ENCODE measurements at regions of chr1 and their contacts with region 1.

Region 1: DNA sequence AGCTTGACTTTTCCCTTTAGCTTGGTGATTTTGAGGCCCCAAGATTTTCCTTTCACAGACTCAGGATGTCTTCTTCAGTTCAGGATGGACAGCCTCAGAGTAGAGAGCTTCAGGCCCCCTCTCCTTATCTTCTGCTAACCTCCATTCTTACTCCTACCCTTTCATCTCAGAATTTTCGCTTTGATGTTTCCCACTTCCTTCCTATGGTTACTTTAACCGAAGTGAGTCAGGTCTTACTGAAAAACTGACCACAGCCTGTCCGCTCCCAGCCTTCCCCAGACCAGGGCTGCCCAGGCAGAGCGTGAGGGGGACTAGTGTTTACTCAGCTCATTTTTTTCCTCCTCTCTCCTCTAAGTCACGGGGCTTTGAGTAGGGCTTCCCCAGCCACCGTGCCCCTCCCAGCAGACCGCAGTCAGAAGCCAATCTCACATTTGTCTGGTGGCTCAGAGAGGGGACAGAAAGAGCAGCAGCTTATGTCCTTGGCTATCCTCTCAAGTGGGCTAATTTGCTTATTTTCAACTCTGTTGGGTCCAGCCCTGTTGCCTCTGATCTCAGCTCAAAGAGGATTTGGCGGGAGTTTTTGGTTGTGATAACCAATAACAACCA is 4.2 kb upstream of the IL19 start:
- DNase-seq: peak; percentile 79
- H3K4me3 Mint-ChIP-seq: no peak overlapping the region
- H3K27ac Mint-ChIP-seq: no peak overlapping the region
- H3K4me1 Mint-ChIP-seq: peaks cover 63% of the 10 kb centered on the region
- H3K27me3 Mint-ChIP-seq: peaks cover 7% of the 10 kb centered on the region

Region 2: DNA sequence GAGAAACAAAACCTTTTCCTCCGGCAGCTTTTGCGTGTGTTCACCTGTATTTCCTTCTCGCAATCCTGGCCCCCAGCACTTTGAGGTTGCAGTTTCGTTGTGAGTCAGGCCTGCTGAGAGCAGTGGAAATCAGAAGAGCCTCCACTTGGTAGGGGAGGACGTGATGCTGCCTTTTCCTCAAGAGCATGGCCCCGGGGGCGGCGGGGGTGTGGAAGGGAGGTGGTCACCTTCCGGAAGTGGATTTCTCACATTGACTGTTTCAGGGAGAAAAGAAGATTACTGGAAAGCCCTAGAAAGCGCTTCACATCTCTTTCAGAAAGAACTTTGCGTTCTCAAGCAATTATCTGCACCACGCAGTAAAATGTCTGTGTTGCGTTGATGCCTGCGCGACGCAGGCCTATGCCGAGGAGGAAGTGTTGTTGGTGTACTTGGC is 18.1 kb after region 1 on chr1:
- CTCF ChIA-PET with region 1: interaction called, 4 read pairs
- intact Hi-C with region 1: loop called (anchors 1 kb)
- DNase-seq: peak; percentile 98
- H3K4me3 Mint-ChIP-seq: no peak overlapping the region
- H3K27ac Mint-ChIP-seq: peak overlapping the region; percentile 62
- H3K4me1 Mint-ChIP-seq: peaks cover 50% of the 10 kb centered on the region
- H3K27me3 Mint-ChIP-seq: peaks cover 7% of the 10 kb centered on the region

Region 3: DNA sequence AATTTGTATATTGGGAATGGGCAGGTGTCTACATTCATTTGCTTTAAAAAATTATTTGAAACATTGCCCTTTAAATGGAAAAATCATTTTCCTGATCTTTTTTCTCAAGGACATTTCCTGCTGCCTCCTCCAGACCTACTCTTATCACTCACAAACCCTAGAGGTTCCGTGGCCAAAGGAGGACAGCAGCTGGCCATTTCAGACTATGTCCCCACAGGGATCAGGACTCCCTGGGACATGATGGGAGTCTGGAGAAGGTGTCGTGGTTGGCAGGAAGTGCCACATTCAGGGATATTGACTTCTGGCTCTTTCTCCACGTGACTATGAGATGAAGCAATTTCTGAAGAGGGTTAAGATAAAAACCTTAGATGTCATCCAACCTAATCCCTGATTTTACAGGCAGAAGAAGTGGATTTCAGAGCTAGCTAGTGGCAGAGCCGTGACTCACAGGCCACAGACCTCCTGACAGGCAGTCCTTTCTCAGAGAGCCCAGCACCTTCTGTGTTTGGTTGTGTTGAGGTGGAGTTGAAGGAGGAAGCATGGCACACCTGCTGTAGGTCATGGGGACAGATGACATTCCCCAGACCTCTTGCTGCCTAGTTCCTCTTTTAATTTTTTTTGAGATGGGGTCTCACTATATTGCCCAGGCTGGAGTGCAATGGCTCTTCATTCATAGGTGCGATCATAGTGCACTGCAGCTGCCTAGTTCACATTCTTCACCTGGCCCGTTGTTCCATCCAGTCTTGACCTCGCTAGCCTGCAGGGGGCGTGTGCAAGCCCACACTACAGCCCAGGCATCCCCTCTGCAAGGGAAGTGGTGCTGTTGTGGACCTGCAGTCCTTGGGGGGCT is 31.4 kb after region 1 on chr1:
- CTCF ChIA-PET with region 1: interaction called, 25 read pairs
- intact Hi-C with region 1: no loop called
- DNase-seq: no peak
- H3K4me3 Mint-ChIP-seq: no peak overlapping the region
- H3K27ac Mint-ChIP-seq: no peak overlapping the region
- H3K4me1 Mint-ChIP-seq: peaks cover 40% of the 10 kb centered on the region
- H3K27me3 Mint-ChIP-seq: peaks cover 7% of the 10 kb centered on the region